ENCODE measurements at regions of chr1 and their contacts with region 1.

Region 1: DNA sequence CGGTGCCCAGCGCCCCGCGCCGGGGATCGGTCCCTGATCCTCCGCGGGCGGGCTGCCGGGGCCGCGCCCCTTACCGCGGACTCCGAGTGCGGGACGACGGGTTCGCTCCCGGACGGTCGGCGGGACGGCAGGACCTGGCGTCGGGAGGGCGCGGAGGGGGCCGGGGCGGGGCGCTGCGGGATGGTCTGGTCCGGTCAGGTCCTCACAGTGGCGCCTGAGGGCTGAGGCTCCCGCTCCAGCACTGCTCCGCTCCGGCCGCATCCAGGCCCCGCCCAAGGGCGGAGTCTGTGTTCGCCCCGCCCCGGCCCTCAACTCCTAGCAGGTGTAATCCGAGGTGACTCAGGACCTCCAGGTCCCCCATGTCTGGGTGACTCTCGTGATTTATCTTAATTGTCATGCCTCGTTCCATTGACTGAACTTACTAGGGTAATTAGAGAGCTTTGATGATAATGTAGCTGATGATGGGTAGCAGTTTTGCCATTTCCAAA is at the start of gene RAB3B:
- DNase-seq: peak; percentile 89
- ATAC-seq: peak; percentile 99
- H3K4me3 Mint-ChIP-seq: peak within 1 kb of the TSS; percentile 68
- H3K27ac Mint-ChIP-seq: no peak within 1 kb of the TSS
- H3K4me1 Mint-ChIP-seq: peaks cover 9% of the 10 kb centered on the region
- H3K27me3 Mint-ChIP-seq: peaks cover 32% of the 10 kb centered on the region
- total RNA-seq, gene RAB3B: 0.07 to 0.11 TPM

Region 2: GRCh38 chr1:51616901-51617708 is 373.4 kb before region 1 on chr1 and contains the start of gene OSBPL9:
- CTCF ChIA-PET with region 1: no interaction called
- POLR2A ChIA-PET with region 1: interaction called, 4 read pairs
- intact Hi-C with region 1: loop called in 1 of 2 experiments (anchors 2 kb)
- DNase-seq: peak; percentile 95
- ATAC-seq: peak; percentile 95
- H3K4me3 Mint-ChIP-seq: peak within 1 kb of the TSS; percentile 100
- H3K27ac Mint-ChIP-seq: peak within 1 kb of the TSS; percentile 96
- H3K4me1 Mint-ChIP-seq: peaks cover 33% of the 10 kb centered on the region
- H3K27me3 Mint-ChIP-seq: no peaks in the 10 kb centered on the region
- total RNA-seq, gene OSBPL9: 46.2 to 64.5 TPM

Region 3: DNA sequence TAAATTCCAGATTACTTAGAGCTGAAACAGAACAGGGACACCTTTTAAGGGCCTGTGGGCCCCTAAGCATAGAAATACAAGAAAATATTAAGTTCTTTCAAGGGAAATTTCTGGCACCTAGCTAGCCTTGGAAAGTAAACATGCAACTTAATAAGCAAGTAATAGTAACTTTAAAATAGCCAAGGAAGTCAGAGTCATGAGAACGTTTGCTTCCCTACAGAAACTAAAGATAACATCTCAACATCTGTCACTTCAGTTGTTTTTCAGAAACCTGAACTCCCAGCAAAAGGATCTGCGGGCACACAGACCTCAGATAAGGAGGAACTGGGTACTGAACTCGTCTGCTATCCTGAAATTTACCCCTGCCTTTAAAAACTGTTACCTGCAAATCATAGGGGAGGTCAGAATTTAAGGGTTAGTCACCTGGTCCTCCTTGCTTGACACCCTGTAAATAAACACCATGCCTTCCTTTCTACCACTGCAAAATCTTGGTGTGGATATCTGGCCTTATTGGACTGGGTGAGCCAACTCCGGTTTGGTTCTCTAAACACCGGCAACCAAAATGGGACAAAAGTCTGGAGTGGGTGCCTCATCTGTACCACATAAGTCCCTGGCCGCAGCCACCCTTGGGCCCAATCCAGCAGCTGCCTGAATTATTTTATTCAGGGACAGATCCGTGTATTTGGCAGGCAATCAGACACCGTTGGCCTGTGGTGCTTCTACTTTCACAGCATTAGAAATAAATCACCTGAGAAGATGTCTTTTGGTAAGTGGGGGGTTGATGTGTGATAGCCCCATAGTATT is 139.9 kb before region 1 on chr1:
- CTCF ChIA-PET with region 1: no interaction called
- POLR2A ChIA-PET with region 1: no interaction called
- intact Hi-C with region 1: no loop called
- DNase-seq: no peak
- ATAC-seq: no peak
- H3K4me3 Mint-ChIP-seq: no peak overlapping the region
- H3K27ac Mint-ChIP-seq: no peak overlapping the region
- H3K4me1 Mint-ChIP-seq: no peaks in the 10 kb centered on the region
- H3K27me3 Mint-ChIP-seq: no peaks in the 10 kb centered on the region

Region 4: GRCh38 chr1:51926171-51926812 is 64.2 kb before region 1 on chr1:
- CTCF ChIA-PET with region 1: interaction called, 4 read pairs
- POLR2A ChIA-PET with region 1: no interaction called
- intact Hi-C with region 1: loop called in 1 of 2 experiments (anchors 2 kb)
- DNase-seq: peak; percentile 18
- ATAC-seq: peak; percentile 44
- H3K4me3 Mint-ChIP-seq: no peak overlapping the region
- H3K27ac Mint-ChIP-seq: no peak overlapping the region
- H3K4me1 Mint-ChIP-seq: peaks cover 2% of the 10 kb centered on the region
- H3K27me3 Mint-ChIP-seq: peaks cover 4% of the 10 kb centered on the region

Measured in activated CD4-positive, alpha-beta T cell treated with anti-CD3 and anti-CD28 coated beads for 36 hours (primary cell).